Transverse colon (tissue), 4 donors: ENCODE measurements at regions of chr10 and their contacts with region 1.

Region 1: DNA sequence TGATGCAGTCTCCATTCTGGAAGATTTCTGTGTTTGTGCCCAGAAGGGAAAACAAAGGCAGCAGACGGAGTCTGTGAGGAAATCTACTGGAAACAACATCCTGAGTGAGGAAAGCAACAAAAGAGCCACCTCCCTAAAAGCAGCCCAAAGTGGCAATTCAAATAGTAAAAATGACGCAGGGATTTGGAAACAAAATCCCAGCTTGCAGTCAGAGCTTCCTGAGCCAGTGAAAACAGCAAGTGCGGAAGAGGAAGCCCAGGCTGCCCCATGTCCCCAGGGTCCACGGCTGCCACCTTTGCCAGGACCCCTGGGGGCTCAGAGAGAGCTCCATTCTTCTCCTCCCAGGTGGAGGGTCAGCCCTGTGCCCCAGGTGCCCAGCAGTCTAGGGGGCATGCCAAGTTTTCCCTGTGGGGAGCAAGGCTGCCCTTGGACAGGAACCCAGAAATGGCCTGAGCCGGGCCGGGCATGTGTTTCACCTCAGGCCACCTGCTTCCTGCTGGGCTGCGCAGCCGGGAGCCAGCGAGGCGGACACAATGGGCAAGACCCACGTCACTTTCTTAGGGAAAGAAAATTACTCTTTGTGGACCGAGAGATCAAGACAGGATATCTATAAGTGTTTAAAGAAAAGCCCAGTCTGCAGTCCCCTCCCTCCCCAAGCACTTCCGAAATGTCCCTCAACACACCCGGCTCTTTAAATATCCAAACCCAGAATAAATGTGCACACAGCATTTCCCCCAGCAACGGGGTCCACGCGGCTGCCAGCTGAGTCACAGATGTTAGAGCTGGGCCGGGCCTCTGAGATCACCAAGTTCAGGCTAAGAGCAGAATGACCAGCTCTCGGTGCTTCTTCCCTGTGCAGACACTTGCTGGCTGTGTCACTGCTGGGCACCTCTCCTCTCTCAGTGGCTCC is 231.1 kb downstream of the ARHGAP12 start:
- DNase-seq: peak; percentile 53
- H3K4me3 ChIP-seq: no peak overlapping the region
- H3K27ac ChIP-seq: peak overlapping the region; percentile 81 to 89 (median 88)
- H3K4me1 ChIP-seq: peaks cover 4 to 58% (median 23%) of the 10 kb centered on the region in 4 donors
- H3K27me3 ChIP-seq: no peaks in the 10 kb centered on the region
- CTCF ChIP-seq: no peak
- EP300 ChIP-seq: no peak
- POLR2A ChIP-seq: peak; percentile 33

Region 2: DNA sequence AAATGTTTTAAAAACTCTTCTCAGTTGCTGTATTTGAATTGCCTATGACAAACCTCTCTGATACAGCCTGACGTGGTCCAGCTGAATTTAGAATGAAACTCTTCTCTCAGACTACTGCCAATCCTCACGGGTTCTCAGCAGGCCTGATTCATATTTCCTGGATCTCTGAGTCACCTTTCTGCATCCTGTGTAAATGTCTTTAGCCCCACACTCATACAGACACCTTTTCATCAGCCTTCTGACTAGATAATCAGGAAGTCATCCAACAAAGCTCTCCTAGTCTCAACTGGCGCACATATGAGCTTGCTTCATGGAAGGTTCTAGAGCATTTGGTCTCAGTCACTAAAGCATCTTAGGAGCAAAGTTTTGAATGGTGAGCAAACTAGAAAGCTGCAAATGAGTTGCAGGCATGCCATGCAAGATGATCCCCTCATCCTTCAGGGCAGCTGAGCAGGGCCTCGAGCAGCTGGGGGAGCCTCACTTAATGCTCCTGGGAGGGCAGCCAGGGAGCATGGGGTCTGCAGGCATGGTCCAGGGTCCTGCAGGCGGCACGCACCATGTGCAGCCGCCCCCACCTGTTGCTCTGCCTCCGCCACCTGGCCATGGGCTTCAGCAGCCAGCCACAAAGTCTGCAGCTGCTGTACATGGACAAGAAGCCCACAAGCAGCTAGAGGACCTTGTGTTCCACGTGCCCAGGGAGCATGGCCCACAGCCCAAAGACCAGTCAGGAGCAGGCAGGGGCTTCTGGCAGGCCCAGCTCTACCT is 48.3 kb after region 1 on chr10:
- in situ Hi-C with region 1: no loop called
- intact Hi-C with region 1: loop called (anchors 1 kb)
- DNase-seq: no peak
- H3K4me3 ChIP-seq: no peak overlapping the region
- H3K27ac ChIP-seq: no peak overlapping the region
- H3K4me1 ChIP-seq: peaks cover 12 to 17% (median 14%) of the 10 kb centered on the region in 4 donors
- H3K27me3 ChIP-seq: no peaks in the 10 kb centered on the region
- CTCF ChIP-seq: no peak
- EP300 ChIP-seq: no peak
- POLR2A ChIP-seq: no peak

Region 3: DNA sequence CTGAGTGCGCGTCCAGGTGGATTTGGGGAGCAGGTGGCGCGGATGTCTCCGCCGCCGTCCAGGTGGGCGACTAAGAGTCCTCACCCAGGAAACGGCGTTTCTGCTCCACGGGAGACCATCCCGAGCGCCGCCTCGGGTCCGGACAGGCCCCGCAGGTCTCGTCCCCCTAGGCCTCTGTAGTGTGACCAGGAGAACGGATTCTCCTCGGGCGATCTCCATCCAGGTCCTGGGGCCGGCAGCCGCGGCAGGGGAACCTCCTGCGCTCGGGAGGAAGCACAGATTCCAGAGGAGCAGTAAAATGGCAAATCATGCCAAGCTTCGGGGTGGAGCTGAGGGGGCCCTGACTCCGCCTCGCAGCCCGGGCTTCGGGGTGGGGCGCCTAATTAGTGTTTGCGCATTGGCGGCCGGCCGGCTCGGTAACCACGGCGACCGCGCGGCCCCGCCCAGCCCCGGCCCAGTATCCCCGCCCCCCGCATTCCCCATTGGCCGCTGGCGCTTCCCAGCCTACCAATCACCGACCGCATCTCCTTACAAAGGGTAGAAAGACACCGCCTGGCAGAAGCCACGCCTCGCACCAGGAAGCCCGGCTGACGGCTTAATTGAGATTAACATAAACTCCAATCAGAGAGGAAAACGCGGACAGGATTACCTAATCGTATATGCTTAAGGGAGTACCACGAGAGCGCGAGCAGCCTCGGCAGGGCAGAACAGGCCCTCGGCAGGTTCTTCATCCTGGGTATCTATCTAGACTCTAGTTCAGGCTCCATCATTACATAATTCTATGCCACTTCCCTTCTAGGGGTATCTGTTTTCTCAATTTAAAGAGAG is 62.5 kb after region 1 on chr10:
- in situ Hi-C with region 1: no loop called
- intact Hi-C with region 1: loop called (anchors 5 kb)
- DNase-seq: peak; percentile 96
- H3K4me3 ChIP-seq: peak overlapping the region; percentile 51 to 84 (median 70)
- H3K27ac ChIP-seq: peak overlapping the region; percentile 92 to 99 (median 96)
- H3K4me1 ChIP-seq: peaks cover 10 to 23% (median 17%) of the 10 kb centered on the region in 4 donors
- H3K27me3 ChIP-seq: no peaks in the 10 kb centered on the region
- CTCF ChIP-seq: no peak
- EP300 ChIP-seq: no peak
- POLR2A ChIP-seq: peak; percentile 94

Region 4: GRCh38 chr10:31830887-31831286 is 133.4 kb after region 1 on chr10:
- in situ Hi-C with region 1: no loop called
- intact Hi-C with region 1: no loop called
- DNase-seq: no peak
- H3K4me3 ChIP-seq: no peak overlapping the region
- H3K27ac ChIP-seq: no peak overlapping the region
- H3K4me1 ChIP-seq: peaks cover 0 to 2% (median 0%) of the 10 kb centered on the region in 4 donors
- H3K27me3 ChIP-seq: no peaks in the 10 kb centered on the region
- CTCF ChIP-seq: no peak
- EP300 ChIP-seq: no peak
- POLR2A ChIP-seq: no peak

Region 5: GRCh38 chr10:31883397-31883796 is 185.9 kb after region 1 on chr10:
- in situ Hi-C with region 1: no loop called
- intact Hi-C with region 1: no loop called
- DNase-seq: no peak
- H3K4me3 ChIP-seq: no peak overlapping the region
- H3K27ac ChIP-seq: peak overlapping the region in 2 of 4 donors; percentile 5 to 14
- H3K4me1 ChIP-seq: peaks cover 2 to 38% (median 18%) of the 10 kb centered on the region in 4 donors
- H3K27me3 ChIP-seq: no peaks in the 10 kb centered on the region
- CTCF ChIP-seq: no peak
- EP300 ChIP-seq: no peak
- POLR2A ChIP-seq: no peak